ENCODE measurements at regions of chr4 and their contacts with region 1.

Region 1: DNA sequence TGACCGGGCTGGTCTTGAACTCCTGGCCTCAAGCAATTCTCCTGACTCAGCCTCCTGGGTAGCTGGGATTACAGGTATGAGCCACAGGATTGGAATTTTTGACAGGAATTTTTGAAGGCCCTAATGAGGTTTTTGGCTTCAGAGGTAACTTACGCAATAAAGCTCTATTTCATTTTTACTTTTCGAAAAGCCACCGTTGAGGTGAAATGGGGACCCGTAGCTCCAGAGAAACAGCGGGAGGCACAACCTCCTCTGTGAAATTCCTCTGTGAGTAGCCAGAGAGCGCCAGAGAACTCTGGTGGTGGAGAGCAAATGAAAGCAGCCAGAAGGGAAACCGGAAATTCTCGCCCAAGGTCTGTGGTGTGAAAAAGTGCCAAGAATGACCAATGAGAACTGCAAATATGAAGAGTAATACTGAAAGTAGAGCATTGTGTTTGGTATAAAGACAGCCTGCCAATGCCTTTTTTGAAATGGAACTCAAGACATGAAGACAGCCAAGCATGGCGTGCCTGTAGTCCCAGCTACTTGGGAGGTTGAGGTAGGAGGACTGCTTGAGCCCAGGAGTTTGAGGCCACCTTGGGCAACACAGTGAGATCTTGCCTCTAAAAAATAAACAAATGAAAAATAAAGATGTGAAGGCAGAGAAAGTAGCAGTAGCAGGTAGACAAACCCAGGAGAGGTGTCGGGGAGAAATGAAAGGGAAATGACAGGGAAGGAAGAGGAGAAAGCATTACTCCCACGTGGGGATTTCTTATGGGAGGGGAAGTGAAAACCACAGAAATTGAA is 33.0 kb upstream of the TMEM131L start:
- DNase-seq: peak; percentile 68 to 92 (median 87)
- H3K4me3 ChIP-seq: peak overlapping the region in 1 of 4 donors; percentile 12
- H3K27ac ChIP-seq: peak overlapping the region in 3 of 5 donors; percentile 51 to 66 (median 54)
- H3K4me1 ChIP-seq: peaks cover 0 to 3% of the 10 kb centered on the region in 2 donors
- H3K27me3 ChIP-seq: no peaks in the 10 kb centered on the region
- CTCF ChIP-seq: peak; percentile 47 to 95 (median 84)
- POLR2A ChIP-seq: peak in 1 of 2 donors; percentile 8

Region 2: DNA sequence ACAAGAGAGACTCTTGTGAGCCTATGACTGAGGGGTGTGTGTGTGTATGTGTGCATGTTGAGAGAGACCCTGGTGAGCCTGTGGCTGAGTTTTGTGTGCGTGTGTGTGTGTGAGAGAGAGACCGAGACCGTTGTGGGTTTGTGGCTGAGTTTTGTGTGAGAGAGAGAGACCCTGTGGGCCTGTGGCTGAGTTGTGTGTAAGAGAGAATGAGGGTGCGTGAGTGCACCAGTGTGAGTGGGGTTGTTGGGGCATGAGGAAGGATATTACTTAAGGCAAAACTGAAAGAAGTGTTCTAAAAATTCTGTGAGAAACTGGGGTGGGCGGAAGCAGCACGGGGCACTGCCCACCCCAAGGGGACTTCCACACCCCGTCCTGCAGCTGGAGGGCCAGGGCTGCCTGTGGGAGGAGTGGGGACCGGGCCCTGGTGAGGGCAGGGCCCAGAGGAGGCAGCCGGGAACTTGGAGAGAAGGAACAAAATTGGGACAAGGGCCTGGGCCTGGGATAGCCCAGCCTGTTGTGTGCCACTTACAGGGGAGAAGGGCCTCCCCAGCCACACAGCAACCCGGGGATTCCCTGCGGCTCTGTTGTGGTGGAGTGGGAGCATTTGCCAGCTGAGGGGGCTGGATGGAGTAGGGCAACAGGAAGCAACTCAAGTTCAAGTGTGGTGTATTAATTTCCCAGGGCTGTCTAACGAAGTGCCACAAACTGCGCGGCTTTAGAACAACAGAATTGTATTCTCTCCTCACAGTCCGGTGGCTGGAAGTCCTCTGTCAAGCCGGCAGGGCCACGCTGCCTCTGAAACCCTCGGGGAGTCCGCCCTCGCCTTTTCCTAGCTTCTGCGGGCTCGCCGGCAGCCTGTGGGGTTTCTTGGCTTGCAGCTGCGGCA is 55.1 kb after region 1 on chr4:
- intact Hi-C with region 1: no loop called
- DNase-seq: no peak
- H3K4me3 ChIP-seq: no peak overlapping the region
- H3K27ac ChIP-seq: peak overlapping the region in 2 of 5 donors; percentile 6 to 57
- H3K4me1 ChIP-seq: peaks cover 0 to 17% of the 10 kb centered on the region in 2 donors
- H3K27me3 ChIP-seq: no peaks in the 10 kb centered on the region
- CTCF ChIP-seq: no peak
- POLR2A ChIP-seq: no peak

Region 3: DNA sequence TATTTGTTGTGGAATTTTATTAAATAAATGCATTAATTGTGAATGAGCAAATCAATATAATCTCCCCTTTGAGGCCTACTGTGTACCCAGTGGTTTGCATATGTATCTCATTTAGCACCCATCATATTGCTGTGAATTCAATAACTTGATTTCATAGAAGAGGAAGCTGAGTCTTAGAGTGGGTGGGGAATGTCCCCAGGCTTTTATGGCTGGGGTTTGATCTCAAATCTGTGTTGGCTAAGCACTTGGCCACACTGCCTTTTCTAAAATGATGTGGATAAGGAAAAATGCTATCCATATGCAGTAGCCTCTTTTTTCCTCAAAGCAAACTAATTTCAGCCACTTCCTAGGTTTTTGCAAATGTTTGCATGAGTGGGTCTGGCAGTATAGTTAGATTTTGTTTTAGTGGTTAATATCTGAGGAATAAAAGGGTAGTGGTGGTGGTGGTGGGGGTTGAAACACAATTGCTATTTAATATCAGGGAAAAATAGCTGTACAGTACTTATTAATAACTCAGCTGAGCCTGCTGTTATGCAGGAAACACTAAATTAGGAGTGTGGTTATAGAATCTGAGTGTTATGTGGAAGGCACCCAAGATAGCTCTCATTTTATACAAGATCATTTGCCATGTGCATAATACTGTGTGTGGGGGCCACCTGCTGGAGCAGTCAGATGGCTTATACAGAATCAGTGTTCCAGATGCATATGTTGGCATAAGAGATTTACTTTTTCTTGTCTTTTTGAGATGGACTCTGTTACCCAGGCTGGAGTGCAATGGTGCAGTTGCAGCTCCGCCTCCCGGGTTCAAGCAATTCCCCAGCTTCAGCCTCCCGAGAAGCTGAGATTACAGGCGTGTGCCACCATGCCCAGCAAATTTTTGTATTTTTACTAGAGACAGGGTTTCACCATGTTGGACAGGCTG is 141.0 kb after region 1 on chr4:
- intact Hi-C with region 1: loop called (anchors 2 to 5 kb)
- DNase-seq: peak; percentile 49 to 85 (median 61)
- H3K4me3 ChIP-seq: no peak overlapping the region
- H3K27ac ChIP-seq: no peak overlapping the region
- H3K4me1 ChIP-seq: peaks cover 0 to 18% of the 10 kb centered on the region in 2 donors
- H3K27me3 ChIP-seq: no peaks in the 10 kb centered on the region
- CTCF ChIP-seq: peak; percentile 28 to 67 (median 58)
- POLR2A ChIP-seq: no peak